Activated CD4-positive, alpha-beta memory T cell treated with anti-CD3 and anti-CD28 coated beads for 36 hours (primary cell): ENCODE measurements at regions of chr19 and their contacts with region 1.

Region 1: GRCh38 chr19:1812469-1813196 is 557 bp upstream of the ATP8B3 start:
- DNase-seq: peak; percentile 95
- H3K4me3 Mint-ChIP-seq: peak overlapping the region; percentile 84
- H3K27ac Mint-ChIP-seq: peak overlapping the region; percentile 87
- H3K4me1 Mint-ChIP-seq: peaks cover 16% of the 10 kb centered on the region
- H3K27me3 Mint-ChIP-seq: no peaks in the 10 kb centered on the region

Region 2: GRCh38 chr19:1560286-1560882 is 252.2 kb before region 1 on chr19:
- CTCF ChIA-PET with region 1: no interaction called
- POLR2A ChIA-PET with region 1: no interaction called
- intact Hi-C with region 1: no loop called
- DNase-seq: no peak
- H3K4me3 Mint-ChIP-seq: no peak overlapping the region
- H3K27ac Mint-ChIP-seq: no peak overlapping the region
- H3K4me1 Mint-ChIP-seq: no peaks in the 10 kb centered on the region
- H3K27me3 Mint-ChIP-seq: no peaks in the 10 kb centered on the region

Region 3: GRCh38 chr19:1767464-1767933 is 45.1 kb before region 1 on chr19:
- CTCF ChIA-PET with region 1: no interaction called
- POLR2A ChIA-PET with region 1: no interaction called
- intact Hi-C with region 1: no loop called
- DNase-seq: peak; percentile 68
- H3K4me3 Mint-ChIP-seq: no peak overlapping the region
- H3K27ac Mint-ChIP-seq: no peak overlapping the region
- H3K4me1 Mint-ChIP-seq: no peaks in the 10 kb centered on the region
- H3K27me3 Mint-ChIP-seq: peaks cover 66% of the 10 kb centered on the region

Region 4: DNA sequence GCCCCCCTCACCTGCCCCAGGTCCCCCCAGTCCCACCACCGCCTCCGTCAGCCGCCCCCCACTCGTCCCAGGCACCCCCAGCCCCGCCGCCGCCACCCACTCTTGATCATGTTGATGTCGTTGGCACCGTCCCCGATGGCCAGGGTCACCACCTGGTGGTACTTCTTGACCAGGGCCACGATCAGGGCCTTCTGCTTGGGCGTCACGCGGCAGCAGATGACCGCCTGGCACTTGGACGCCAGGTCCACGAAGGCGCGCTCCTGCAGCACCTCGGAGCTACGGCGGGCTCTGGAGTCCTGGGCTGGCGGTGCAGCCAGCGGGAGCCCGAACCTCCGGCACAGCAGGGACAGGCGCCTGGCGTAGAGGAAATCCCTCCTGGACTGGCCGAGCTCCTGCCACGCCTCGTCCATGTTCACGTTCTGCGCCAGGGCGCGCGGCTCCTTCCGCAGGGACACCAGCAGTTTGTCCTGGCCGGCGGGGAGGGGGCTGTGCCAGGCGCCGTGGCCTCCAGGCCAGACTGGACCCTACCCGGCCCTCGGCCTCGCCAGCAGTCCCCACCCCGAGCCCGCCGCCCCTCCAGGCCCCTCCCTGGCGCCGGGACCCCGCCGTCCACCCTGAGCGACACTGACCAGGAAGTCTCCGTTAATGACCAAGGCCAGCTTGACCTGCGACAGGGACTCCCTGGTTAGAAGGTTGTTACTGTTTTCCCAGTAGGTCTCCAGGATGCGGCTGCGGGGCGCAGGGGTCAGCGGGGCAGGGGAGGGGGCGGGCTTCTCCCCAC is 23.2 kb before region 1 on chr19:
- CTCF ChIA-PET with region 1: interaction called, 6 read pairs
- POLR2A ChIA-PET with region 1: no interaction called
- intact Hi-C with region 1: loop called (anchors 2 kb)
- DNase-seq: no peak
- H3K4me3 Mint-ChIP-seq: no peak overlapping the region
- H3K27ac Mint-ChIP-seq: no peak overlapping the region
- H3K4me1 Mint-ChIP-seq: no peaks in the 10 kb centered on the region
- H3K27me3 Mint-ChIP-seq: peaks cover 5% of the 10 kb centered on the region

Region 5: GRCh38 chr19:1832046-1832663 is 19.5 kb after region 1 on chr19:
- CTCF ChIA-PET with region 1: no interaction called
- POLR2A ChIA-PET with region 1: no interaction called
- intact Hi-C with region 1: no loop called
- DNase-seq: no peak
- H3K4me3 Mint-ChIP-seq: no peak overlapping the region
- H3K27ac Mint-ChIP-seq: no peak overlapping the region
- H3K4me1 Mint-ChIP-seq: peaks cover 5% of the 10 kb centered on the region
- H3K27me3 Mint-ChIP-seq: no peaks in the 10 kb centered on the region

Region 6: GRCh38 chr19:1848399-1849131 is 35.9 kb after region 1 on chr19 and contains the start of gene REXO1:
- CTCF ChIA-PET with region 1: no interaction called
- POLR2A ChIA-PET with region 1: no interaction called
- intact Hi-C with region 1: loop called (anchors 1 kb)
- DNase-seq: peak; percentile 98
- H3K4me3 Mint-ChIP-seq: peak within 1 kb of the TSS; percentile 88
- H3K27ac Mint-ChIP-seq: peak within 1 kb of the TSS; percentile 89
- H3K4me1 Mint-ChIP-seq: peaks cover 61% of the 10 kb centered on the region
- H3K27me3 Mint-ChIP-seq: no peaks in the 10 kb centered on the region
- total RNA-seq, gene REXO1: 41.9 to 45.3 TPM